Activated B cell treated with CpG ODN at 0.5 μM for 24 hours (primary cell): ENCODE measurements at regions of chr6 and their contacts with region 1.

Region 1: DNA sequence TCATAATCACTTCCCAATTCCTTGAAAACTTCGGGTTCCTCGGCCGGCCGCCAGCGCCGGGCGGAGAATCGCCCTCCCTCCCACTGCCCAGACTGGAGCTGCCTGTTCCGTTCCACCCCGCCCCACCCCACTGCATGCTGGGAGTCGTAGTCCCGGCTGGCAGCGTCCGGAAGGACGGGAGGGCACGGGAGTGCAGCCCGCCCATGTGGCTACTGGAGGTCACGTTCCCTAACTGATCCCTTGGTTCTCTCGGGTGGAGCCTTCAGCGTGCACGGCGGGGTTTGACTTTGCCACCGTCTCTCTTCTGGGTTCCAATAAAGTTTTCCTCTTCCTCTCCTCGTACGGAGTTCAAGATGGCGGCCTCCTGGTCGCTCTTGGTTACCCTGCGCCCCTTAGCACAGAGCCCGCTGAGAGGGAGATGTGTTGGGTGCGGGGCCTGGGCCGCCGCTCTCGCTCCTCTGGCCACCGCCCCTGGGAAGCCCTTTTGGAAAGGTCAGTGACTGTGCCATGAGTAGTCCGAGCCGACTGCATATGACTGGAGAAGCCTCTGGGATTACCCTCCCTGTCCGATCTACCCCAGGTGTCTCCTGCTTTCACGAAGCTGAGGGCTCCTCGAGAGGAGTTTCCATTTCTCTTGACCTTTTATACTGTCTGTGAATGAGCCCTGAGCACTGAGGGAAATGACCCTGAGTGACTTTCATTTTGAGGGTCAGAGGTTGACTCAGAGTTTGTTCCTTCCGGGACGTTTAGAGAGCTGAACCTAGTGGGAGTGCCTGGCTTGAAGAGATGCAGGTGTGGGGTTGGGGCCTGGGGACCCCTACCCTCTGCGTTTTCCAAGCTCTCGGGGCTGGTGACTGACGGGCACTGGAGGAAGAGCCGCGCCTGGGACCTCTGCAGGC is at the start of gene AFG1L:
- DNase-seq: peak; percentile 89
- ATAC-seq: peak; percentile 92
- H3K4me3 Mint-ChIP-seq: peak within 1 kb of the TSS; percentile 99
- H3K27ac Mint-ChIP-seq: peak within 1 kb of the TSS; percentile 100
- H3K4me1 Mint-ChIP-seq: peaks cover 30% of the 10 kb centered on the region
- H3K27me3 Mint-ChIP-seq: no peaks in the 10 kb centered on the region
- CTCF ChIP-seq: no peak
- total RNA-seq, gene AFG1L: 7.5 and 10.3 TPM in 2 replicates

Region 2: DNA sequence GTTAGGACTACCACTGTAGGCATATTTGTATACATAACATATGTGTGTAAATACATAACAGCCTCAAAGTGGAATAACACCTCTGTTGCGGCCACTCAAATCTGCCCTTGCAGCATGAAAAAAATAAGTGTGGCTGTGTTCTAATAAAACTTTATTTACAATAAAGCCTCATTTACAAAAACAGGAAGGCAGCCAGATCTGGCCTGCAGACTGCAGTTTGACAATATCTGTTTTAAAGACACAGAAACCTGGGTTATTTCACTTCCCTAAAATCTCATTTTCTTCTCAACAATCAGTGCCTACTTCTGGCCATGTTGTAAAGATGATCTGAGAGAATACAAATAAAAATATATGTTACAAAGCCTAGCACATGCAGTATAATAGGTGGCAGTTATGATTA is 417.0 kb before region 1 on chr6:
- CTCF ChIA-PET with region 1: no interaction called
- POLR2A ChIA-PET with region 1: interaction called, 14 read pairs
- intact Hi-C with region 1: no loop called
- DNase-seq: no peak
- ATAC-seq: peak; percentile 68
- H3K4me3 Mint-ChIP-seq: no peak overlapping the region
- H3K27ac Mint-ChIP-seq: peak overlapping the region; percentile 75
- H3K4me1 Mint-ChIP-seq: peaks cover 15% of the 10 kb centered on the region
- H3K27me3 Mint-ChIP-seq: no peaks in the 10 kb centered on the region
- CTCF ChIP-seq: no peak

Region 3: GRCh38 chr6:108074359-108075144 is 220.4 kb before region 1 on chr6 and contains the start of gene OSTM1:
- CTCF ChIA-PET with region 1: no interaction called
- POLR2A ChIA-PET with region 1: no interaction called
- intact Hi-C with region 1: loop called (anchors 1 kb)
- DNase-seq: peak; percentile 98
- ATAC-seq: peak; percentile 96
- H3K4me3 Mint-ChIP-seq: peak within 1 kb of the TSS; percentile 87
- H3K27ac Mint-ChIP-seq: peak within 1 kb of the TSS; percentile 89
- H3K4me1 Mint-ChIP-seq: peaks cover 32% of the 10 kb centered on the region
- H3K27me3 Mint-ChIP-seq: peaks cover 2% of the 10 kb centered on the region
- CTCF ChIP-seq: no peak
- total RNA-seq, gene OSTM1: 17.6 and 21.4 TPM in 2 replicates

Region 4: GRCh38 chr6:108309844-108310243 is 14.9 kb after region 1 on chr6:
- CTCF ChIA-PET with region 1: no interaction called
- POLR2A ChIA-PET with region 1: interaction called, 20 read pairs
- intact Hi-C with region 1: no loop called
- DNase-seq: no peak
- ATAC-seq: no peak
- H3K4me3 Mint-ChIP-seq: no peak overlapping the region
- H3K27ac Mint-ChIP-seq: no peak overlapping the region
- H3K4me1 Mint-ChIP-seq: peaks cover 18% of the 10 kb centered on the region
- H3K27me3 Mint-ChIP-seq: no peaks in the 10 kb centered on the region
- CTCF ChIP-seq: no peak

Region 5: DNA sequence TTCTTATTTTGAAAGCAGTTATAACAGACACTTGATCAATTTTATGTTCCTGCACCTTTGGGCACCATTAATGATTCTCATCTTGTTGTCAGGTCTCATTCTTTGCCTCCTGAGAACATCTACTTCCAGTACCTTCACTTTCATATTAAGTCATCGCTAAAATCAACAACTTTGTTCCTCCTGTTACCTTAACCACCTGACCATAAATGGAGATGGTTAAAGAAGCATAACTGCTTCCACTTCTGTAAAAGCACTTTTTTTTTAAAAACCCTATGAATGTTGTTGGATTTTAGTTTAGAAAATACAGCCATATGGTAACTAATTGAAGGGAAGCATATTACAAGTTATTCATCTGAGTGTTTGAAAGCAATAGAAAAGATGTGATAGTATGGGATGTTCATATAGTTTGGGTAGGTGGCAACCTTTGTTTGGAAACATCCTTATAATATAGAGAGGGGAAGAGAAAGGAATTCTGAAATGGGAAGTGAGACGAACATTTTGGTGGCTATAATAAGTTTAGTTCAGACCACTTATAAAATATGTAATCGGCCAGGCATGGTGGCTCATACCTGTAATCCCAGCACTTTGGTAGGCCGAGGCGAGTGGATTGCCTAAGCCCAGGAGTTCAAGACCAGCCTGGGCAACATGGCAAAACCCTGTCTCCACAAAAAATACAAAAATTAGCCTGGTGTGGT is 53.8 kb after region 1 on chr6:
- CTCF ChIA-PET with region 1: no interaction called
- POLR2A ChIA-PET with region 1: interaction called, 7 read pairs
- intact Hi-C with region 1: loop called (anchors 1 kb)
- DNase-seq: no peak
- ATAC-seq: peak; percentile 94
- H3K4me3 Mint-ChIP-seq: peak overlapping the region; percentile 75
- H3K27ac Mint-ChIP-seq: peak overlapping the region; percentile 99
- H3K4me1 Mint-ChIP-seq: peaks cover 34% of the 10 kb centered on the region
- H3K27me3 Mint-ChIP-seq: no peaks in the 10 kb centered on the region
- CTCF ChIP-seq: no peak

Region 6: GRCh38 chr6:108848116-108848868 is 553.3 kb after region 1 on chr6 and contains the start of gene ARMC2:
- CTCF ChIA-PET with region 1: no interaction called
- POLR2A ChIA-PET with region 1: no interaction called
- intact Hi-C with region 1: loop called (anchors 1 kb)
- DNase-seq: peak; percentile 98
- ATAC-seq: peak; percentile 94
- H3K4me3 Mint-ChIP-seq: peak within 1 kb of the TSS; percentile 86
- H3K27ac Mint-ChIP-seq: peak within 1 kb of the TSS; percentile 83
- H3K4me1 Mint-ChIP-seq: peaks cover 14% of the 10 kb centered on the region
- H3K27me3 Mint-ChIP-seq: peaks cover under 1% of the 10 kb centered on the region
- CTCF ChIP-seq: no peak
- total RNA-seq, gene ARMC2: 3.5 and 4.3 TPM in 2 replicates